ENCODE measurements at regions of chr10 and their contacts with region 1.

Region 1: DNA sequence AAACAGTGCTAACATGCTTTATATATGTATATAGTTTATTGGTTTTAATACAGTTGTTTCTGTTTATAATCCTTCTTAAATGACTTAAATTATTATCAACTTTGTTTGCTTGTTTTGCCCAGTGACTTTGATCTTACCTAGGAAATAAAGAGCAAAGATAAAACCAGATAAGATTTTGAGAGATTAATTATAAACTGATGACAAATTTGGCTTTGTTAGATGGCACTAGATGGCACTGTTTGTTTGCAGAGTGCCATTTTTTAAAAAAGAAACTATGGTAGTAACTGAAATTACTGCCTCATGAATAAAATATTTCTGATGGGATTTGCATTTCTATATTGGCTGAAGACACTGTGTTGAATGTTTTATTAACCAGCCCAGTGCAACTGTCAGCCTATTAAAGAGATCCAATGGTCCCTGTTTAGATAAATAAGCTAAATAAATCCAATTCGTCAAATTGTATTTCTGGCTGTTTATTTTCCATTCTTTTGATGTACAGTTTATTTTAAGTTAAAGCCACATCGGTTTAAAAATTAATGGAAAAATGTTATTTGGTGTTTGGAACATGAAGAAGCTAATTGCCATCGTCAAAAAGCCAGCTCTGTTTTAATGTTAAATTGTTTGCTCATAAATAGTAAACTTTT is 28.7 kb downstream of the VTI1A start:
- DNase-seq: no peak
- H3K4me3 ChIP-seq: no peak overlapping the region
- H3K27ac ChIP-seq: no peak overlapping the region
- H3K4me1 ChIP-seq: no peaks in the 10 kb centered on the region
- H3K27me3 ChIP-seq: no peaks in the 10 kb centered on the region
- CTCF ChIP-seq: peak in 3 of 4 experiments; percentile 30 to 64 (median 52)
- POLR2A ChIP-seq: no peak

Region 2: GRCh38 chr10:112519129-112519761 is 43.5 kb after region 1 on chr10:
- intact Hi-C with region 1: no loop called
- DNase-seq: no peak
- H3K4me3 ChIP-seq: no peak overlapping the region
- H3K27ac ChIP-seq: no peak overlapping the region
- H3K4me1 ChIP-seq: no peaks in the 10 kb centered on the region
- H3K27me3 ChIP-seq: no peaks in the 10 kb centered on the region
- CTCF ChIP-seq: no peak
- POLR2A ChIP-seq: no peak

Region 3: DNA sequence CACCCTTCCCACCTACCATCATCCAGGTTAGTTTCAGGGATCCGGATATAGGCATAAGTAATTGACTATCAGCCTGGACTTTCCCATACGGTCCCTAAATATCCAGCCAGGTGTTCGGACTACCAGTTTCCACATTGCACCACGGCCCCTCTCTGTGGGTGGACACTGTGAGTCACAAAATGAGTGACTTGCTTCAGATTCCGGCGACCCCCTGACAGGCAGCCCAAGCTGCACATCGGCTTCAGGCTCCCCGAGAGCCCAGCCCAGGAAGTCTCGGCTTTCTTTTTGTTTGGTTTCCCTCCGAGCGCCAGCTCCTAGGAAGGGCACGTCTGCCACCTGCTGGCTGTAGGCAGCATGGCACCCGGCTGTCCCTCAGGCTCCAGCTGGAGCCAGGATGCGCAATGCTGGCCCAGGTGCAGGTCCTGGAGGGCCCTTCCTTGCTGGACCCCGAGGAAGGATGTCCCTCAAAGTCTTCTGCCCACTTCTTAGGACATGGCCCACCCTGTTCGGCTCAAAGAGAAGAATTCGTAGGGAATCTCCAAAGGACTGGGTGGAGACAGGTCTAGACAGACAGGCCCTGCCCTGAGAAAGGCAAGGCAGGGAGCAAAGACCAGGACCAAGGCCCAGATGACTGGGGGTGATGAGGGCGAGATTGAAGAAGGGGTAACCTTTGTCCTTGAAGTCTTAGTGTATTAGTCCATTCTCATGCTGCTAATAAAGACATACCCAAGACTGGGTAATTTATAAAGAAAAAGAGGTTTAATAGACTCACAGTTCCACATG is 1087.8 kb after region 1 on chr10:
- intact Hi-C with region 1: loop called (anchors 5 kb)
- DNase-seq: peak; percentile 70
- H3K4me3 ChIP-seq: peak overlapping the region; percentile 16 to 28
- H3K27ac ChIP-seq: no peak overlapping the region
- H3K4me1 ChIP-seq: no peaks in the 10 kb centered on the region
- H3K27me3 ChIP-seq: no peaks in the 10 kb centered on the region
- CTCF ChIP-seq: peak; percentile 88 to 97 (median 92)
- POLR2A ChIP-seq: no peak

Measured in prostate gland (tissue), 2 donors.